ENCODE measurements at regions of chr3 and their contacts with region 1.

Region 1: DNA sequence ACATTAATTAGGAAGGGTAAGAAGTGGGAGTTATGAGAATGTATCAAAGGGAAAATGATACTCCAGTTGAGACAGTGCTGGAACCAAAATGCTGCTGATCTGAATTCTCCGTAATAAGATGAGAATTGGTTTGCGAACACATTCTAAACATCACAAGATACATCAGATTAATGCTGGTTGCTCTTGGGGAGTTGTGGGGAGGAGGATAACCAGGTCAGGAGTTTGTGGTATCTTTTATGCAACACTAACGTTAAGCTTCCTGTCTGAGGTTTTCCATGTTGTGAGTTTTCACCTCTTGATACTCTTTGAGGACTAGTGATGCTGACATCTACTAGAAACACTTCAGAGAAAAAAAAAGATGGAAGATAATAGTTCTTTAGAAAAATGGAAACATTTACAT is 47.2 kb downstream of the PPARG start:
- DNase-seq: peak; percentile 11
- H3K4me3 Mint-ChIP-seq: peak overlapping the region; percentile 20
- H3K27ac Mint-ChIP-seq: peak overlapping the region; percentile 57
- H3K4me1 Mint-ChIP-seq: peaks cover 27% of the 10 kb centered on the region
- H3K27me3 Mint-ChIP-seq: peaks cover 1% of the 10 kb centered on the region

Region 2: GRCh38 chr3:11770477-11771391 is 565.4 kb before region 1 on chr3:
- intact Hi-C with region 1: no loop called
- DNase-seq: peak; percentile 86
- H3K4me3 Mint-ChIP-seq: no peak overlapping the region
- H3K27ac Mint-ChIP-seq: peak overlapping the region; percentile 46
- H3K4me1 Mint-ChIP-seq: peaks cover 26% of the 10 kb centered on the region
- H3K27me3 Mint-ChIP-seq: no peaks in the 10 kb centered on the region

Region 3: DNA sequence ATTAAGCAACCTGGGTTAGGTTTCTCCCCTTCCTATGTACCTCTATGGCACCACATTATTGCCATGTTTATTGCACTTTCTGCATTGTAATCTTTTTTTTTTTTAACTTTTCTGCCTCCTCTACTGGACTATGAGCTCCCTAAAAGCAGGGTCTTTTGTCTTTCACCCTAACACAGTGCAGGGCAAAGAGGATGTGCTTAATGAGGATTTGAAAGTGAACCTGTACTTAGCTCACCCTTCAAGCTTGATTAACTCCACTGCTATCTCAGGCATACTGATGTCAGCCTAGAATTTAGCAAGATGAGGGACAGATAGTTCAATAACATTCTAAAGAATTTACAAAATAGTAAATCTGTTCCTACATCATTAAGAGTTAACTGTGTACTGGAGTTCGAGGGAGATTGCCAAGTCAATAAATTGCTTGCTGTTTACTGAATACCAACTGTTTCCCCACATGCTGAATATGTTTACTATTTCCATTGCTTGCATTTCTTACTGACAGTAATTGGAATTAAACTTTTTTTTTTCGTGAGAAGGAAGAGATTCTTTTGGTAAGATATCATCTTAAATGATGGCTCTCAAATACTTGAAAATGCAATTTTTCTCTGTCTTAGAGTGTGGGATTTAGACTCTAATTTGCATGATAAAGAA is 62.9 kb before region 1 on chr3:
- intact Hi-C with region 1: no loop called
- DNase-seq: no peak
- H3K4me3 Mint-ChIP-seq: no peak overlapping the region
- H3K27ac Mint-ChIP-seq: no peak overlapping the region
- H3K4me1 Mint-ChIP-seq: no peaks in the 10 kb centered on the region
- H3K27me3 Mint-ChIP-seq: peaks cover 18% of the 10 kb centered on the region

Region 4: DNA sequence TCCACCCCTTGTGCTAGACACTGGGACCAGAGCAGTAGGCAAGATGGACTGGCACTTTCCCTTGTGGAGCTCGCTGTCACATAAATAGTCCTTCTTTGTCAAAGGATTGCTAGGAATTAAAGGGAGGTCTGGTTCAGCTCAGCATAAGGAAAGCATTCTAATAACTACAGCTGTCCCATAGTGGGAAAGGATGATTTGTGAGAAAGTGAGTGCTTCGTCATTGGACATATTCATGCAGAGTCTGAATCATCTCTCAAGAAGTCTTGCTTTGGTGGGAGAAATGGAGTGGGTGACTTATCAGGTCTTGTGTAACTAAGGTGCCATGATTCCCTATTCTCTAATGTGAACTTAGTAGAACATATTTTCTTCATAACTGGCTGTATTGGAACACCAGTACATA is 32.6 kb before region 1 on chr3:
- intact Hi-C with region 1: no loop called
- DNase-seq: no peak
- H3K4me3 Mint-ChIP-seq: no peak overlapping the region
- H3K27ac Mint-ChIP-seq: no peak overlapping the region
- H3K4me1 Mint-ChIP-seq: peaks cover 17% of the 10 kb centered on the region
- H3K27me3 Mint-ChIP-seq: peaks cover 7% of the 10 kb centered on the region

Region 5: DNA sequence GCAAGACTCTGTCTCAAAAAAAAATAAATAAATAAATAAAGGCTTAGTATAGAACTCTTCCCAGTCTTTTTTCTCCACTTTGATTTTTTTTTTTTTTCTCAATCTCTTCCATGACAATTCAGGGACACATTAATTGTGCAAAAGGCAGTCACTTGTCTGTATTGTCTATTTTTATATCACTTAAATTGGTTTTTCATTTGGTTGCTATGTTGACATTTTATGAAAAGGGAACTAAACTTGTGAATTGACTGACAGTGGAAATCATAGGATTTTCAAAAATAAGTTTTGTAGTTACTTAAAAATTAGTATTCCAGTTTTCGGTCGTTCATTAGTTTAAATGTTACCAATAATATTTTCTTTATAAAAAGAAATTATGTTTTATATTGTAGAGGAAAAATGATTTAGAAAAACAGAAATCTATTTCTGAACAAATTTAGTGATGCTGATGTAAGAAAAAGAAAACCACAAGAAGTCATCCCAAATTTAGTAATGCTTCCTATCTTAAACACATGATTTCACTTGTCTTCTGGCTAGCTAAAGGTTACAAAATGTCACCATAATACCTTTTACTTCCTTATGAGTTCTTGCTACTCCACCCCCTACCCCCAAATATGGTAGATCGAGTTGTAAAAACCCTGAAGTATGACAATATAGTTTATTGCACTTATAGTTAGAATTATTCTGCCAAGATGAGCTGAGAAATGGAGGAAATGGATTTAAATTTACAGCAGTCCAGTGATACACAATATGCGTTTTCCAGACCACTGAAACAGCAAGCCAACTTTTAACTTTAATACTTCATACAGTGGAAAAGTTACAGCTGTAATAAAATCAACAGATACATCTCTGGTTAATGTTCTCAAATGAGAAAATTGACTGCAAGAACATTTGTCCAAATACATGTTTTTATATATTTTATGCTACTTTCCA is 10.2 kb before region 1 on chr3:
- intact Hi-C with region 1: loop called (anchors 1 kb)
- DNase-seq: no peak
- H3K4me3 Mint-ChIP-seq: no peak overlapping the region
- H3K27ac Mint-ChIP-seq: peak overlapping the region; percentile 58
- H3K4me1 Mint-ChIP-seq: peaks cover 9% of the 10 kb centered on the region
- H3K27me3 Mint-ChIP-seq: peaks cover 8% of the 10 kb centered on the region